ENCODE measurements at regions of chr10 and their contacts with region 1.

Region 1: DNA sequence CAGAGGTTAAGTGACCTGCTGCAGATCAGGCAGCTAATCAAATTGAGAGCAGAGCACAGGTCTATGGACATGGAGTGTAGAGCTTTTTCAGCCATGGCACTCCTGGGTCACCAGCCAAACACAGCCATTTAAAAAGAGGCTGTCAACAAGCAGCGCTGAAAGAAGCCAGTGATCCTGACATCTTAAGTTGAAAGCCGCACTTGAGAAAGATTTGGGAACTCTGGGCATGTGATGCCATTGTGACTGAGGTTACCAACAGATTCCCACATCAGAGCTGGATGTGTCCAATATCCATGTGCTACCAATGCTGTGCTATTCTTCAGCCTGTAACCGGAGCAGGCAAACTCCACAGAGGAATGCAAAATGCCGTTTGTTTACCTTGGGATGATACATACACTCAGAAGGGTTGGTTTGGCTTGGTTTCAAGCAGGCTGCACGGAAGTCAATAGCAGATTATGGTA is 56.2 kb upstream of the ABLIM1 start:
- DNase-seq: peak; percentile 94
- ATAC-seq: peak; percentile 97
- H3K4me3 ChIP-seq: no peak overlapping the region
- H3K27ac ChIP-seq: peak overlapping the region; percentile 71
- H3K4me1 ChIP-seq: peaks cover 38% of the 10 kb centered on the region
- H3K27me3 ChIP-seq: no peaks in the 10 kb centered on the region
- CTCF ChIP-seq: no peak

Region 2: DNA sequence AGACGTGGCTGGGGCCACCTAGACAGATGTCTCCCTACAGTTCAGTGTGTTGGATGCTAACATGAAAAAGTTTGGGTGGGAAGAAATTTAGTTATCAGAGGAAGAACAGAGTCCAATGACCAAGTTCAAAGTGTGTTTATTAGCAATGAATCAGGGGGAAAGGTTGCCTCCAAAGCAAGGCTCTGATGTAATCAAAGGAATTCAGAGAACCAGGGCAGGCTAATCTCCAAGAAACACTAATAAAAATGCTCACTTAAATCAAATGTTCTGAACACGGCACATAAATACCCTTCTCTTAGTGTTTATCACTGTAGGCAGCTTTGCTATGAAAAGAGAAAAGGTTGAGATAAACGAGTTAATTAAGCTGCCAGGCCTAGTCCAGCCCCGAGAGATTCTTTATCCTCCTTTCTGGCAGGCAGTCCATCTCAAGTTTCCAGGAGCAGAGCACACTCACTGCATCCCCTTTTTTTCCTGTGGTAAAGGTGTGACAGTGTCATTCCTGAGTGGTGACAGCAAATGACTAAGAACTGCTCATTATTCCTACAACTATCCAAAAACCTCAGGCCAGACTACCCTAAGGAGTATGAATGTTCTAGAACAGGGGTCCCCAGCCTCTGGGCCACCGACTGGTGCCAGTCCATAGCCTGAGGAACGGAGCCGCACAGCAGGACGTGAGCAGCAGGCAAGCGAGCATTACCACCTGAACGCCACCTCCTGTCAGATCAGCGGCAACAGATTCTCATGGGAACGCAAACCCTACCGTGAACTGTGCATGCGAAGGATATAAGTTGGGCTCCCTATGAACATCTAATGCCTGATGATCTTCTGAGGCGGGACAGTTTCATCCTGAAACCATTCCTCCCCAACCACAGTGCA is 40.4 kb after region 1 on chr10:
- CTCF ChIA-PET with region 1: no interaction called
- POLR2A ChIA-PET with region 1: no interaction called
- intact Hi-C with region 1: loop called (anchors 1 kb)
- DNase-seq: peak; percentile 77
- ATAC-seq: peak; percentile 71
- H3K4me3 ChIP-seq: peak overlapping the region; percentile 30; the same call in 1 of the 2 replicates
- H3K27ac ChIP-seq: peak overlapping the region; percentile 72
- H3K4me1 ChIP-seq: peaks cover 38% of the 10 kb centered on the region
- H3K27me3 ChIP-seq: no peaks in the 10 kb centered on the region
- CTCF ChIP-seq: no peak

Region 3: GRCh38 chr10:114791768-114792167 is 77.5 kb after region 1 on chr10:
- CTCF ChIA-PET with region 1: no interaction called
- POLR2A ChIA-PET with region 1: no interaction called
- intact Hi-C with region 1: no loop called
- DNase-seq: no peak
- ATAC-seq: no peak
- H3K4me3 ChIP-seq: no peak overlapping the region
- H3K27ac ChIP-seq: no peak overlapping the region
- H3K4me1 ChIP-seq: no peaks in the 10 kb centered on the region
- H3K27me3 ChIP-seq: no peaks in the 10 kb centered on the region
- CTCF ChIP-seq: no peak

Measured in PC-3 (cell line).